Activated CD8-positive, alpha-beta memory T cell treated with anti-CD3 and anti-CD28 coated beads, Interleukin-2, amount 10 ng/mL, durations not matched to agents 7 days and 5 days (primary cell): ENCODE measurements at regions of chr19 and their contacts with region 1.

Region 1: DNA sequence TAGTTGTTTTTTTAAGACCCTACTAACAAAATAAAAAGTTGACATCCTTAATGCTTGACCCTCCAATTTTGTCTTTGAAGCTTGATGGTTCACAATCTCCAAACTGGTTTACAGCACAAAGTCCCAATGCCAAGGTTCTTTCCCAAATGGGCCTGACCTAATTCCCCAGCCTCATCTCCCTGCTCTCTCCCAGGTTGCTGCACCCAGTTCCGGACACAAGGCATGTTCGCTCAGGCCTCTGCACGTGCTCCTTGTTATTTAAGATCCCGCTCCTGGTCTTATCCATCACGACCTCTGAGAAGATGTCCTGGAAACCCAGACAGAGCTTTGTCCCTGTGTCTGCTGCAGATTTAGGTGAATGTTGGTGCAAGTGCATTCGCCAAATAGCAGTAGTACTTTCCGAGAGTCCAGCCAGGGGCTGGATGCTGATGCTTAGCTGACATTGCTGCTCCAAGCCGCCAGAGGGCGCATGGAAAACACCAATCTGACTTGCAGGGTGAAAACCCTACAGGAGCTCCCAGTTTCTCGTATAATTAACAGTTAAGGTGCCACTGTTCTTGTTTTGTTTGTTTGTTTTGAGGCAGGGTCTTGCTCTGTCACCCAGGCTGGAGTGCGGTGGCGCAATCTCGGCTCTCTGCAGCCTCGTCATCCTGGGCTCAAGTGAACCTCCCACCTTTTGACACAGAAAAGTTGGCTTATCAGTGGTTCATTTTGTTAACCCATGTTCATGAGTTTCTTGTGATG is 18.5 kb downstream of the LYPD3 start:
- DNase-seq: peak; percentile 82
- ATAC-seq: peak; percentile 76
- H3K4me3 Mint-ChIP-seq: no peak overlapping the region
- H3K27ac Mint-ChIP-seq: no peak overlapping the region
- H3K4me1 Mint-ChIP-seq: peaks cover 16% of the 10 kb centered on the region
- H3K27me3 Mint-ChIP-seq: no peaks in the 10 kb centered on the region

Region 2: GRCh38 chr19:43433358-43433673 is 13.6 kb before region 1 on chr19:
- CTCF ChIA-PET with region 1: interaction called, 33 read pairs
- DNase-seq: no peak
- ATAC-seq: no peak
- H3K4me3 Mint-ChIP-seq: no peak overlapping the region
- H3K27ac Mint-ChIP-seq: no peak overlapping the region
- H3K4me1 Mint-ChIP-seq: peaks cover 18% of the 10 kb centered on the region
- H3K27me3 Mint-ChIP-seq: no peaks in the 10 kb centered on the region

Region 3: DNA sequence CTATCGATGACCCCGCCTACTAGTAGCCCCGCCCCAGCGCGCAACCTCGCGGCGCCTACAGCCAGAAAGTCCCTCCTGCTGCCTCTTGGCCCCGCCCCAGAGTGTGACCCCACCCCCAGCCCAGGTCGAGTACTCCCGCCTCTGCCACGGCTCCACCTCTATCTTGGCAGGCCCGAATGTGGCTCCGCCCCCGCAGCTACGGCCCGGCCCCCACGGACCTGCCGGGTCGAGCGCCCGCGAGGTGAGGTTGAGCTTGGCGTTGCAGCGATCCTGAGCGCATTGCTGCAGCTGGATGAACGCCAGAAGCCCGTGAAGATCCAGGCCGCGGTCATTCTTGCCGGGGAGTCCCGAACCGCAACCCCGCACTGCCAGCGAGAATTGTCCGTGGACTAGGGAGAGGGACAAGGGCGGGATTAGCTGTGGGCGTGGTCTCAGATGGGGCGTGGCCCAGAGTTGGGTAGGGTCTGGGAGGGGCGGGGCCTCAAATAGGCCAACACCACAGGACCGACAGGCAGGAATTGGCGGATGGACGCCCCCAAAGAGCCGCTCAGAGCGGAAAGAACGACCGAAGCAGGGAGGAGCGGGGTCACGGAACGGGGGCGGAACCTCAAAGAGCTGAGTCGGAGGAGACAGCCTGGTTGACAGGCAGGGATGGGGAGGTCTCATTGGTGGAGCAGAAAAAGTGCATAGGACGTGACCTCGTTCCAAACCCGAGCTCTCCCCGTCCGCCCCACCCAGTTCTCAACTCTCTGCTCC is 16.6 kb after region 1 on chr19:
- CTCF ChIA-PET with region 1: interaction called, 54 read pairs
- DNase-seq: peak; percentile 99
- ATAC-seq: peak; percentile 92
- H3K4me3 Mint-ChIP-seq: peak overlapping the region; percentile 90
- H3K27ac Mint-ChIP-seq: peak overlapping the region; percentile 90
- H3K4me1 Mint-ChIP-seq: peaks cover 27% of the 10 kb centered on the region
- H3K27me3 Mint-ChIP-seq: peaks cover 4% of the 10 kb centered on the region

Region 4: DNA sequence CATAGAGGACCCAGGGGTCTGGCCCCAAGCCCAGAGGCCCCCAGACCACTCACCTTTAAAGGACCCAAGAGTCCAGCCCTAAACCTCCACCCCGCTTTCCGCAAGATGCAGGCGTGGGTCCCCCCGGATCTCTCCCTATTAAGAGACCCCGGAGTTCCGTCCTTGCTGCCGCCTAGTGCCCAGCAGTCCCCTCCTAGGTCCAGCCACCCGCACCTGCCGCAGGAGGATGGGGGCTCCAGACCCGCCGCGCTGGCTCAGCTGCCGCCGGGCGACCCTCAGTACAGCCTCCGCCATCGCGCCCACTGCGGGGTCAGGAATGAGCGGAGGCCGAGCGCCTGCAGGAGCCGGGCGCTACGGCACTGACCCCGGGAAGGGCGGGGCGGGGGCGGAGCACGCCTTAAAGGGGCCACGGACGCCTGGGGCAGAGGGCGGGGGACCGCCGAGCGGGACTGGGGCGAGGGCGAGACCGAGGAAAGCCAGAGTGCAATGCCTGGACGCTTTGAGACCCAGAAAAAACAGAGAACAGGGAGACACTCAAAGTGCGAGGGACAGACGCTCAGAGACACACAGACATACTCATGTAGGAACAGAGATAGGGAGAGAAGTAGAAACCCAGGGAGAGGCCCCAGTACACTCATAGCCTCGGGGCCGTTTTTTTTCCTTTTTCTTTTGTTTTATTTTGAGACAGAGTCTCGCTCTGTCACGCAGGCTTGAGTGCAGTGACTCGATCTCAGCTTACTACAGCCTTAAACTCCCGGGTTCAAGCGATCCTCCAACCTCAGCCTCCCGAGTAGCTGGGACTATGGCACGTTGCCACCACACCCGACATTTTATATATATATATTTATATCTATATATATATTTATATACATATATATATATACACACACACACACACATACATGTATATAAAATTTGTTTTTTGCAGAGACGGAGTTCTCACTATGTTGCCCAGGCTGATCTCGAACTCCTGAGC is 80.3 kb after region 1 on chr19 and contains the start of gene ETHE1:
- CTCF ChIA-PET with region 1: interaction called, 274 read pairs
- DNase-seq: peak; percentile 88
- ATAC-seq: peak; percentile 96
- H3K4me3 Mint-ChIP-seq: peak within 1 kb of the TSS; percentile 89
- H3K27ac Mint-ChIP-seq: peak within 1 kb of the TSS; percentile 93
- H3K4me1 Mint-ChIP-seq: peaks cover 24% of the 10 kb centered on the region
- H3K27me3 Mint-ChIP-seq: no peaks in the 10 kb centered on the region
- total RNA-seq, gene ETHE1: 52.6 to 55.8 TPM

Region 5: GRCh38 chr19:43555185-43555770 is 108.4 kb after region 1 on chr19:
- CTCF ChIA-PET with region 1: interaction called, 13 read pairs
- DNase-seq: peak; percentile 89
- ATAC-seq: peak; percentile 94
- H3K4me3 Mint-ChIP-seq: no peak overlapping the region
- H3K27ac Mint-ChIP-seq: peak overlapping the region; percentile 61
- H3K4me1 Mint-ChIP-seq: peaks cover 11% of the 10 kb centered on the region
- H3K27me3 Mint-ChIP-seq: no peaks in the 10 kb centered on the region